Activated CD4-positive, alpha-beta T cell treated with anti-CD3 and anti-CD28 coated beads, Interleukin-2, amount 10 ng/mL, durations not matched to agents 7 days and 5 days (primary cell): ENCODE measurements at regions of chr10 and their contacts with region 1.

Region 1: GRCh38 chr10:80444646-80445319 is 9.3 kb upstream of the TSPAN14 start:
- DNase-seq: peak; percentile 43
- H3K4me3 Mint-ChIP-seq: no peak overlapping the region
- H3K27ac Mint-ChIP-seq: peak overlapping the region; percentile 73
- H3K4me1 Mint-ChIP-seq: peaks cover 38% of the 10 kb centered on the region
- H3K27me3 Mint-ChIP-seq: peaks cover 8% of the 10 kb centered on the region

Region 2: DNA sequence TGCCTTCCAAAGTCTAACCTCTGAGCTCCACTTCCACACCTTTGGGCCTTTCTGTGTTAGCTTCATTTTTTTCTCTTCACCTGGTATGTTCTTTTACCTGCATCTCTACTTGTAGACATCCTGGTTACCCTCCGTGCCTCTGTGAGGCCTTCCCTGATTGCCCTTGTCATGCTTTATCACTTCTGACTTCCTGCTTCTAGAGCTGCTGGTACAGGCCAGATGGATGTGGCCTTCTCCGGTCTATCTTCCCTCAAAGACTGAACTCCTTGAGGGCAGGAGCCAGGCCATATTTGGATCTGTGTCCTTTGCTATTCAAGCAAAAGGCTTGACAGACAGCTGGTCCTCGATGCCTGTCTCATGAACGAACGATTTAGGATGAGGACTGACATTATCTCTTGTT is 13.2 kb before region 1 on chr10:
- CTCF ChIA-PET with region 1: interaction called, 15 read pairs
- POLR2A ChIA-PET with region 1: no interaction called
- DNase-seq: no peak
- H3K4me3 Mint-ChIP-seq: no peak overlapping the region
- H3K27ac Mint-ChIP-seq: no peak overlapping the region
- H3K4me1 Mint-ChIP-seq: peaks cover 3% of the 10 kb centered on the region
- H3K27me3 Mint-ChIP-seq: no peaks in the 10 kb centered on the region

Region 3: GRCh38 chr10:80459047-80459931 is 14.5 kb after region 1 on chr10:
- CTCF ChIA-PET with region 1: interaction called, 14 read pairs
- POLR2A ChIA-PET with region 1: no interaction called
- DNase-seq: peak; percentile 84
- H3K4me3 Mint-ChIP-seq: peak overlapping the region; percentile 98
- H3K27ac Mint-ChIP-seq: peak overlapping the region; percentile 86
- H3K4me1 Mint-ChIP-seq: peaks cover 80% of the 10 kb centered on the region
- H3K27me3 Mint-ChIP-seq: no peaks in the 10 kb centered on the region

Region 4: GRCh38 chr10:80487791-80488538 is 43.2 kb after region 1 on chr10:
- CTCF ChIA-PET with region 1: interaction called, 15 read pairs
- POLR2A ChIA-PET with region 1: no interaction called
- DNase-seq: peak; percentile 78
- H3K4me3 Mint-ChIP-seq: peak overlapping the region; percentile 64
- H3K27ac Mint-ChIP-seq: peak overlapping the region; percentile 89
- H3K4me1 Mint-ChIP-seq: peaks cover 99% of the 10 kb centered on the region
- H3K27me3 Mint-ChIP-seq: no peaks in the 10 kb centered on the region

Region 5: DNA sequence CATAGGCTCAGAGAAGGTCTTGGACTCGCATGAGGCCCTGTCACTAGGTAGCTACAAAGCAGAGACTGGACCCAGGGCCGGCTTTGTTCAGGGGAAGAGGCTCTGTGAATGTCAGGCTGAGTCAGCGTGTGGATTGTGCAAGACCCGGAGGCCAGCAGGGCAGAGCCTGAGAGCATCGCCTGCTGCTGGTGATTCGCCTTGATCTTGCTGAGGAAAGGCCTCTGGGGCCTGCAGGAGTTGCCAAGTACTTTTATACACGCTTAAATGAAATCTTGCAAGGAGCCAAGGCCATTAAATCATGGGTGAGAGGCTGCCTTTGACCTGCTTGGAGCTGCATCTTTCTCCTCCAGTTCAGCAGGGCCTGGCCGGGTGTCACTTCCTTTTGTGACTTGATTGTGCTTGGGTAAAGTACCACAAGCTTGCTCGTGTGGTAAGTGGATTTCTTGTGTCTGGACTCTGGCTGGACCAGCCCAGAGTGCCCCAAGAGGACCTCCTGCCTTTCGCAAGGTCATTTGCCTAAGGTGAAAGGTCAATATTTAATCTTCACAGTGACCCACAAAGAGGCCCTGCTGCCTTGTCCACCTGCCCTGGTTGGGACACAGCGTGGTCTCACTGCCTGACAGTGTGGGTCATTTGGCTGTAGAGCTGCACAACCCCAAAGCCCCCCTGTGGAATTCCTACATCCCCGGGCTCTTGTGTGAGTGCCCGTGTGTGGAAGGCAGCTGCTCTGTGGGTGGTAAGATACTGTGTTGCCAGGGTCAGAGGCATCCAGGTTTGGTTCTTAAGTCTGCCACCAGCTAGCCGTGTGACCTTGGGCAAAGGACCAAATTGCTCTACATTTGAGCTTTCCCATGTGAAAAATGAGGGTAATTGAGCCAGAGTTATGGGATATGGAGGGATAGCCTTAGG is 54.3 kb after region 1 on chr10:
- CTCF ChIA-PET with region 1: interaction called, 118 read pairs
- POLR2A ChIA-PET with region 1: no interaction called
- DNase-seq: peak; percentile 45
- H3K4me3 Mint-ChIP-seq: peak overlapping the region; percentile 44
- H3K27ac Mint-ChIP-seq: peak overlapping the region; percentile 89
- H3K4me1 Mint-ChIP-seq: peaks cover 98% of the 10 kb centered on the region
- H3K27me3 Mint-ChIP-seq: no peaks in the 10 kb centered on the region

Region 6: GRCh38 chr10:80504158-80504811 is 59.5 kb after region 1 on chr10:
- CTCF ChIA-PET with region 1: interaction called, 118 read pairs
- POLR2A ChIA-PET with region 1: no interaction called
- DNase-seq: no peak
- H3K4me3 Mint-ChIP-seq: no peak overlapping the region
- H3K27ac Mint-ChIP-seq: peak overlapping the region; percentile 87
- H3K4me1 Mint-ChIP-seq: peaks cover 71% of the 10 kb centered on the region
- H3K27me3 Mint-ChIP-seq: no peaks in the 10 kb centered on the region

Region 7: GRCh38 chr10:80512031-80512526 is 67.3 kb after region 1 on chr10:
- CTCF ChIA-PET with region 1: interaction called, 23 read pairs
- POLR2A ChIA-PET with region 1: interaction called, 3 read pairs
- DNase-seq: no peak
- H3K4me3 Mint-ChIP-seq: no peak overlapping the region
- H3K27ac Mint-ChIP-seq: peak overlapping the region; percentile 25
- H3K4me1 Mint-ChIP-seq: peaks cover 27% of the 10 kb centered on the region
- H3K27me3 Mint-ChIP-seq: no peaks in the 10 kb centered on the region